A673 (cell line): ENCODE measurements at regions of chr11 and their contacts with region 1.

Region 1: DNA sequence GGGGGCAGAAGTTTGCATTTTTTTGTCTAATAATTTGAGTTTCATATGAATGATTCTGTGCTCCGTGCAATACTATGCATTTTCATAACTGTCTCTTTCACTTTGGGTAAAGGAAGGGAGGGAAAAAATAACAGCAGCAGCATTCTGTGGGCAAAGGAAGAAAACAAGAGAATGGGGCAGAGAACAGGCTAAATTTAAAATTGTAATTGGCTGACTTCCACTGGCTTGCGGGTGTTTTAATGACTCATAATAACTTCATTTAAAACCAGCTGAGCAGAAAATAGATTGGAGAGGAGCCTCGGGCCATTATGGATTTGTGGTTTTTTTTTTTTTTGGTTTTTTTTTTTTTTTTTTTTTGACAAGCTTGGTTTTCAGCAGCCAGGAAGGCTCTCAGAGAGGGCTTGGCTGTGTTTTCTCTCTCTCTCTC is 107.4 kb downstream of the ZBTB16 start:
- DNase-seq: peak; percentile 94
- H3K4me3 ChIP-seq: peak overlapping the region; percentile 5
- H3K27ac ChIP-seq: no peak overlapping the region
- H3K4me1 ChIP-seq: peaks cover 96% of the 10 kb centered on the region
- H3K27me3 ChIP-seq: no peaks in the 10 kb centered on the region
- CTCF ChIP-seq: no peak

Region 2: GRCh38 chr11:113764527-113765219 is 402.2 kb before region 1 on chr11:
- CTCF ChIA-PET with region 1: no interaction called
- POLR2A ChIA-PET with region 1: no interaction called
- intact Hi-C with region 1: no loop called
- DNase-seq: no peak
- H3K4me3 ChIP-seq: no peak overlapping the region
- H3K27ac ChIP-seq: no peak overlapping the region
- H3K4me1 ChIP-seq: no peaks in the 10 kb centered on the region
- H3K27me3 ChIP-seq: no peaks in the 10 kb centered on the region
- CTCF ChIP-seq: no peak

Region 3: DNA sequence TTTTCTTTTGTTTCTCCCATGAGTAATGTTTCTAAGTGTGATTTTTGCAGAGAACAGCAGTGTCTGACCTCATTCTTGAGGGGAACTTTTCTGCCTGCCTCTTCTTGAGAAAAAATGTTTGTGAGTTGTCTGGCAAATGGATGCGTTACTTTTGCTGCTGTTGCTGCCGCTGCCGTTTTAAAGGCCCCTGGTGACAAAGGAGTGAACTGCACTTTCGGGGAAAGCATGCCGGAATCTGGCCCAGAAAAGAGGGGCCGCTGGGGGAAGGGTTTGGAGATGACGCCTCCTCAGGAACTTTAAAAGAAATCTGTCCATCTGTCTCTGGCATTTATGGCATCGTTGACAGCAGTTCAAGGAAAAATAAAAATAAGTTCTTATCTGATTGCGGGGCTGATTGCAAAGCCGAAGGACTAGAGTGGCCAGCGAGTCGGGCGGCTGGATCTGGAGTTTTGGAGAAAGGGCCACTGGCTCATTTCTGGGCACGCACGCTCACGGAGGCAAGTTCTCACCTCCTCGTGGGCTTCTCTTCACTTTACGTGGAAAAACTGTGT is 90.9 kb before region 1 on chr11:
- CTCF ChIA-PET with region 1: no interaction called
- POLR2A ChIA-PET with region 1: no interaction called
- intact Hi-C with region 1: loop called (anchors 2 kb)
- DNase-seq: peak; percentile 88
- H3K4me3 ChIP-seq: no peak overlapping the region
- H3K27ac ChIP-seq: no peak overlapping the region
- H3K4me1 ChIP-seq: peaks cover 85% of the 10 kb centered on the region
- H3K27me3 ChIP-seq: no peaks in the 10 kb centered on the region
- CTCF ChIP-seq: peak; percentile 79

Region 4: DNA sequence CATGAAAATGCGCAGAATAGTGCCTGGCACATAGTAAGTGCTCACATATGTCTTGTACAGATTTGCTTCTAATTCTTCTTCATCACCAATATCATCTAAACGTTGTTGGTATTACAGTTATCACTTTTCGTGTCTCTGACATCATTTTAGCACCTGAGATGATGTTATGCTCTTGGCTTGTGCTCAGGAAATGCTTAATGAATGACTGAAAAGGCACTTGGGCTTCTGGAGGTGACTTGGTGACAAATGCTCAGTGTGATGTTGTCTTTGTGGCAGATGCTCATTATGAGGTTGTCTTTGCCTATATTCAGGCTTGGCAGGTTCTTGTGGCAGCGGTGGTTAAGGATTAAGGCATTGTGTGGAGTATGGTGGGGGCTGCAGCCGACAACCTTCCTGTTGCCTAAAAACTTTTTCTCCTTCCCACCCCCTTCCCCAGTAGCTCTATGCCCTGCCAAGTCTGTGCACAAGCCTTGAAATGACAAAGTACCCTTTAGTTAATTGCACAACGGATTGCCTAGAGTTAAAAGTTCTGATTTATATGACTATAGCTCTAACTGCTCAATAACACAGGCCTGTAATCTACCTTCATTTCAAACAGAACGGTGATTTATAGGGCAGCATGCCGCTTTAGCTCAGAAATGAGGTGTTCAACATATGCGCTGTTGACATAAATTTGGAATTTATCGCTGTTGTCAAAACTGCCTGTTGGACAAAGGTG is 24.9 kb before region 1 on chr11:
- CTCF ChIA-PET with region 1: no interaction called
- POLR2A ChIA-PET with region 1: interaction called, 14 read pairs
- intact Hi-C with region 1: no loop called
- DNase-seq: peak; percentile 59
- H3K4me3 ChIP-seq: no peak overlapping the region
- H3K27ac ChIP-seq: peak overlapping the region; percentile 91
- H3K4me1 ChIP-seq: peaks cover 97% of the 10 kb centered on the region
- H3K27me3 ChIP-seq: no peaks in the 10 kb centered on the region
- CTCF ChIP-seq: no peak

Region 5: DNA sequence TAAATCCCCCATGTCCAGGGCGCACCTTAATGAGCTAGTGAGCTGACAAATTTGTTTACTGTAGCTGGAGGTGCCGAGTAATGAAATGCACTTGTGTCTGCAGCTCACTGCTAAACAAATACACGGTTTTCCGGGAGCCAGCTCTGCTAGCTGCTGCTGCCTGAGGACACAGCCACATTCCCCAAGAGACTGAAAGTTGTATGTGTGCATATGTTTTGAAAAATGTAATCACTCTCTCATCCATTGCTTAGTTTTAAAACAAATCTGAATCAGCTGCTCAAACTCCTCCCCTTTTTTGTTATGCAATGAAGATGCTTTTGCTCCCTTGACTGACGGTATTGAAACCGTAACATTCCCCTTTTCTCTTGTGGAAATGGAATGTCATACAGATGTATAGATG is 66.8 kb after region 1 on chr11:
- CTCF ChIA-PET with region 1: no interaction called
- POLR2A ChIA-PET with region 1: interaction called, 15 read pairs
- intact Hi-C with region 1: no loop called
- DNase-seq: no peak
- H3K4me3 ChIP-seq: no peak overlapping the region
- H3K27ac ChIP-seq: no peak overlapping the region
- H3K4me1 ChIP-seq: peaks cover 12% of the 10 kb centered on the region
- H3K27me3 ChIP-seq: no peaks in the 10 kb centered on the region
- CTCF ChIP-seq: no peak